ENCODE measurements at regions of chr5 and their contacts with region 1.

Region 1: DNA sequence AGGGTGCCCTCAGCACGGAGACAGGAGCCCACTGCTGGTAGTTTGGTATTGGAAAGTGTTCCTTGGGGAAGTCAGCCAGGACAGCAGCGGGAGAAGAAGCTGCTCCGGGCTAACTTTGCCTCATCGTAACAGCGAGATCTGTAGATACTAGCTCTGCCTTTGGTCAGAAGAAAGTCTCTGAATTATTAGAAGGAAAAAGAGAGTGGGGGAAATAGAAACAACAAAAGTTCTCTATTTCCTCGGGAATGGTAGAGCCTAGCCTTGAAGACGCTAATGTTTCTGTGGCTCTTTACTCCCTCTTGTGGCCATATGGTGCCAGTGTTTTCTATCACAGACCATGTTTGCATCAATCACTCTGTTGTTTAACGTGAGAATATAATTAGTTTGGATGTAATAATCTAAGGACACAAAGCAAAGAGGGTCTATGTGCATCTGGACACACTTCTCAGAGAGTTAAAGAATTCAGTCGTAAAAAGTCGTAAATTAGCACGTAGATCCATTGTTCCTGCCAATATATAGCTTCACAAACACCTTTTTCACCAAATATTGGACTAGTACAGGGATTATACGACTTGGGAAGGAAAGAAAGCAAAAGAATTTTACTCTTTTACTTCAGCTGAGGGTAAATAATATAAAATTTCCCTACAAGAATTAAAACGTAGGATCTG is 40.2 kb upstream of the HSD17B4 start:
- DNase-seq: peak in 1 of 2 experiments; percentile 65
- H3K4me3 ChIP-seq: peak overlapping the region; percentile 43 to 70 (median 56); a peak in 7 of 8 replicates
- H3K27ac ChIP-seq: no peak overlapping the region
- H3K4me1 ChIP-seq: no peaks in the 10 kb centered on the region
- H3K27me3 ChIP-seq: no peaks in the 10 kb centered on the region
- CTCF ChIP-seq: peak; percentile 36 to 88 (median 66); a peak in 3 of 4 replicates
- EP300 ChIP-seq: no peak
- POLR2A ChIP-seq: no peak; a peak in 1 of 3 replicates
- RAD21 ChIP-seq: peak; percentile 89 to 91

Region 2: DNA sequence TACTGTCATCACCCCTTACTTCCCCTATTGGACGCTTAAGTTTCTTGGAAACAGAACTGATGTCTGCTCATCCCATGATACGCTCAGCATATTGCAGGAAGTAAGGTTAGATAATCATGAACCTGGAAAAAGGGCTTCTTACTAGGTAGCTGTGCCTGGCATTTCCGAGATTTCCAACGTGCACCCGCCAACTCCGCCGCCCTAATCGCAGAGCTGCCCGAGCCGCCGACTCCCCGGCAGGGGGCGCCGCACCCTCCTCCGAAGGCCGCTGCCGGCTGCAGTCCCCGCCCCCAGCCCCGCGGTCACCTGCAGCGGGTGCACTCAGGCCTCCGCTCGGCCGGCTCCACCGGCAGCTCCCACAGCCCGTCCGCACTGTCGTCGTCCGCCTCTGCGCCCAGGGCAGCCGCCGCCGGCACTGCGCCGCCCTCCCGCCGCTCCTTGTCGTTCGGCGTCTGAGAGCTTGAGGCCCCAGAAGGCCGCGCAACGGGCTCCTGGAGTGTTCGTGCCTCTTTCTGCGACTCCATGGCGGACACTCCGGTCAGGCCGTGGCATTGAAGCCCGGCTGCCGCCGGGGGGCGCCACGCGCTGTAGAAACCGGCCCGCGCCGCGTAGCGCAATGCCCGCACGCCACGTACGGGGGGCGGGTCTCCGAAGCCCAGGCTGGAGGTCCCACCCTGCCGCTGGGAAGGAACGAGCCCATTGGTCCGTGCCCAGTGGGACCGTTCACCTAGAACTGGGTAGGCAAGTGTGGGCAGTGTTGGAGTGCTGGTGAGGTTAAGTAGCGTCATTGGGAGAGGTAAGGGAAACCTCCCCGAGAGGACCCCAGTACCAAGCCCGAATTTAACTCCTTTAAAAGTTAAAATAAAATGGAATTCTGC is 423.8 kb before region 1 on chr5 and contains the start of gene DTWD2:
- CTCF ChIA-PET with region 1: interaction called, 42 read pairs
- POLR2A ChIA-PET with region 1: interaction called, 6 read pairs
- DNase-seq: peak; percentile 92 to 99
- H3K4me3 ChIP-seq: peak within 1 kb of the TSS; percentile 46 to 85 (median 80)
- H3K27ac ChIP-seq: peak within 1 kb of the TSS; percentile 97; the same call in 1 of the 2 replicates
- H3K4me1 ChIP-seq: no peaks in the 10 kb centered on the region; a peak in 1 of 7 replicates
- H3K27me3 ChIP-seq: no peaks in the 10 kb centered on the region
- CTCF ChIP-seq: peak; percentile 83 to 94 (median 92)
- EP300 ChIP-seq: no peak; a peak in 1 of 3 replicates
- POLR2A ChIP-seq: peak; percentile 85 to 89
- RAD21 ChIP-seq: peak; percentile 87 to 90
- total RNA-seq, gene DTWD2: 15.0 and 17.1 TPM in 2 replicates

Region 3: DNA sequence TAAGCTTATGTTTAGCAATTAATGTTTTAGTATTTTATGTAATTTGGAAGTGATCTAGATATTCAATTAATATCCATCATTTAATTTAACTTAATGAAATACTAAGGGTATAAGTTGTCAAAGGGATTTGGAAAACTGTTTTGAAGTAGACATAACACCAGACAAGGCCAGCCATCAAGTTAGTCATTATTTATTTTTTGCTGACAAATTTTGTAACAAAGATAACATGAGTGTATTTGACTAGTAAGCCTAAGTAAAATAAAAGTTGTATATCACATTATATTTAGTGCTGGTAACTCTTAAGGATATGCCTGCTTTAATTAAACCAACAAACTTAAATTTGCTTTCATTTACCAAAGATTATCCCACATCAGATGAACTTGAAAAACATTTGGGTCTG is 182.1 kb before region 1 on chr5:
- CTCF ChIA-PET with region 1: interaction called, 12 read pairs
- POLR2A ChIA-PET with region 1: no interaction called
- DNase-seq: no peak
- H3K4me3 ChIP-seq: no peak overlapping the region
- H3K27ac ChIP-seq: no peak overlapping the region
- H3K4me1 ChIP-seq: no peaks in the 10 kb centered on the region
- H3K27me3 ChIP-seq: no peaks in the 10 kb centered on the region
- CTCF ChIP-seq: no peak
- EP300 ChIP-seq: no peak
- POLR2A ChIP-seq: no peak
- RAD21 ChIP-seq: no peak

Region 4: GRCh38 chr5:119267958-119268386 is 144.1 kb before region 1 on chr5:
- CTCF ChIA-PET with region 1: interaction called, 15 read pairs
- POLR2A ChIA-PET with region 1: interaction called, 4 read pairs
- DNase-seq: peak; percentile 89 to 90
- H3K4me3 ChIP-seq: peak overlapping the region; percentile 80 to 95 (median 84)
- H3K27ac ChIP-seq: peak overlapping the region; percentile 37; the same call in 1 of the 2 replicates
- H3K4me1 ChIP-seq: peaks cover 0 to 3% (median under 1%) of the 10 kb centered on the region in 4 experiments; a peak in 2 of 7 replicates
- H3K27me3 ChIP-seq: peaks cover 0 to 1% (median 0%) of the 10 kb centered on the region in 4 experiments; a peak in 2 of 7 replicates
- CTCF ChIP-seq: peak; percentile 36 to 68 (median 64)
- EP300 ChIP-seq: no peak
- POLR2A ChIP-seq: no peak
- RAD21 ChIP-seq: peak; percentile 14 to 39; a peak in 2 of 4 replicates

Region 5: DNA sequence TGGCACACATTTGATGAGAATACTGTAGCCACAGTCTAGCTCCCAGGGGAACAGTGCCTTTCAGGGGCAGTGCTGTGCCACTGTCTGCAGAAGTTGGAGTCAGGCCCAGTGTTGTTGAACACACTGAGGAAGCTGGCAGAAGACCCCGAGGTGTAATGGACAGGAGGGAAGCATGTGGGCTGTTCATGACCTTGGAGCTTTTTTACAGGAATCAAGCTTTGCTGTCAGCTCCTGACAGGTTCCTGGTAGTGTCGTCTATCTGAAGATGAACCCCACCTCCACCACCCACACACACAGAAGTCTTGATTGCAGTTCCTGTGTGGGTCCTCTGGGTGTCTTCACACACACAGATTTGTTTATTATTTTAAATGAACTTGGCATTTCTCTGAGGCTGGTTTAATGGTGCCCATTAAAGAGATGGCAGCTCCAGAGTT is 96.5 kb before region 1 on chr5:
- CTCF ChIA-PET with region 1: interaction called, 26 read pairs
- POLR2A ChIA-PET with region 1: no interaction called
- DNase-seq: no peak
- H3K4me3 ChIP-seq: no peak overlapping the region
- H3K27ac ChIP-seq: no peak overlapping the region
- H3K4me1 ChIP-seq: no peaks in the 10 kb centered on the region
- H3K27me3 ChIP-seq: no peaks in the 10 kb centered on the region
- CTCF ChIP-seq: no peak
- EP300 ChIP-seq: no peak
- POLR2A ChIP-seq: no peak
- RAD21 ChIP-seq: peak; percentile 14 to 20; a peak in 2 of 4 replicates

Region 6: GRCh38 chr5:119347991-119348390 is 64.1 kb before region 1 on chr5:
- CTCF ChIA-PET with region 1: interaction called, 10 read pairs
- POLR2A ChIA-PET with region 1: no interaction called
- DNase-seq: no peak
- H3K4me3 ChIP-seq: no peak overlapping the region
- H3K27ac ChIP-seq: no peak overlapping the region
- H3K4me1 ChIP-seq: peaks cover 0 to 24% (median 15%) of the 10 kb centered on the region in 4 experiments; a peak in 6 of 7 replicates
- H3K27me3 ChIP-seq: no peaks in the 10 kb centered on the region
- CTCF ChIP-seq: no peak
- EP300 ChIP-seq: no peak
- POLR2A ChIP-seq: no peak
- RAD21 ChIP-seq: no peak

Region 7: GRCh38 chr5:119393746-119394145 is 18.3 kb before region 1 on chr5:
- CTCF ChIA-PET with region 1: interaction called, 19 read pairs
- POLR2A ChIA-PET with region 1: no interaction called
- DNase-seq: no peak
- H3K4me3 ChIP-seq: no peak overlapping the region
- H3K27ac ChIP-seq: no peak overlapping the region
- H3K4me1 ChIP-seq: peaks cover 0 to 12% (median 3%) of the 10 kb centered on the region in 4 experiments; a peak in 2 of 7 replicates
- H3K27me3 ChIP-seq: no peaks in the 10 kb centered on the region
- CTCF ChIP-seq: no peak
- EP300 ChIP-seq: no peak
- POLR2A ChIP-seq: no peak
- RAD21 ChIP-seq: no peak

Region 8: DNA sequence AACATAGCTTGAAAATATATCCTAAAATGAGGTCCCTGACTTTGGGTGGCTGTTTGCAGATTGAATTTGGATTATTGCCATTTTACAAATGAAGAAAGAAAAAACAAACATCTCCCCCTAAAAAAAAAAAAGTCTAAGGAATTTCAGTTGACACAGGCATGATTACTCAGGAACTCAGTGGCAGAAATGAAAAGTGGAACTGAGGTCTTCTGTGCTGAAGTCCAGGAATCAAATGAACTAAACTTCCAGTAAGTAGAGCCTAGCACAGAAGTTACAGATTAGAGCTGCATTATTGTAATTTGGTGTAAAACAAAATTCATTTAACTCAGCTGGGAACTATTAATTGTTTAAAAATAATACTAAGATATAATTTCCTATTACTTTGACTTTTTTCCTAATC is 244.0 kb after region 1 on chr5:
- CTCF ChIA-PET with region 1: no interaction called
- POLR2A ChIA-PET with region 1: no interaction called
- DNase-seq: no peak
- H3K4me3 ChIP-seq: no peak overlapping the region
- H3K27ac ChIP-seq: no peak overlapping the region
- H3K4me1 ChIP-seq: no peaks in the 10 kb centered on the region
- H3K27me3 ChIP-seq: no peaks in the 10 kb centered on the region
- CTCF ChIP-seq: no peak
- EP300 ChIP-seq: no peak
- POLR2A ChIP-seq: no peak
- RAD21 ChIP-seq: no peak

Measured in H1 (cell line).